ENCODE measurements at regions of chr7 and their contacts with region 1.

Region 1: DNA sequence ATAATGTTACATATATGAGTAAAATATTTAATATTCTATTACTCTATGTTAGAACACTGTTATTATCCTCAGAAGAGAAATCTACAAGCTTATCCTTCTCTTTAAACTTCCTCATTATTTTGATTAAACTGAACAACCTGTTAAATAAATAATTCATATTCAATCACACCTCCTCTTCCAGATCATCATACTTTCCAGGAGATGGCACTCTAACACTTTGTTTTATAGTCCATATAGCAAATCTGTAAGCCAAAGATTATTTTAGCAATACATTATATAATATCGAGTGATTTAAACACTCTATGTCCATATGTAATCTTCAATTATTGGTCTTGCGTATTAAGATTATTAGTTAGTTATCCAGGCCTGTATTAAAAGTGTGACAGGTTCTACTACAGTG is 694.1 kb downstream of the ANKRD7 start:
- DNase-seq: peak; percentile 52
- H3K4me3 ChIP-seq: no peak overlapping the region
- H3K27ac ChIP-seq: no peak overlapping the region
- H3K4me1 ChIP-seq: no peaks in the 10 kb centered on the region
- H3K27me3 ChIP-seq: no peaks in the 10 kb centered on the region
- CTCF ChIP-seq: peak; percentile 60

Region 2: GRCh38 chr7:118250860-118251494 is 667.6 kb before region 1 on chr7:
- CTCF ChIA-PET with region 1: no interaction called
- POLR2A ChIA-PET with region 1: no interaction called
- intact Hi-C with region 1: loop called (anchors 10 kb)
- DNase-seq: peak; percentile 23
- H3K4me3 ChIP-seq: no peak overlapping the region
- H3K27ac ChIP-seq: no peak overlapping the region
- H3K4me1 ChIP-seq: no peaks in the 10 kb centered on the region
- H3K27me3 ChIP-seq: no peaks in the 10 kb centered on the region
- CTCF ChIP-seq: peak; percentile 66

Region 3: DNA sequence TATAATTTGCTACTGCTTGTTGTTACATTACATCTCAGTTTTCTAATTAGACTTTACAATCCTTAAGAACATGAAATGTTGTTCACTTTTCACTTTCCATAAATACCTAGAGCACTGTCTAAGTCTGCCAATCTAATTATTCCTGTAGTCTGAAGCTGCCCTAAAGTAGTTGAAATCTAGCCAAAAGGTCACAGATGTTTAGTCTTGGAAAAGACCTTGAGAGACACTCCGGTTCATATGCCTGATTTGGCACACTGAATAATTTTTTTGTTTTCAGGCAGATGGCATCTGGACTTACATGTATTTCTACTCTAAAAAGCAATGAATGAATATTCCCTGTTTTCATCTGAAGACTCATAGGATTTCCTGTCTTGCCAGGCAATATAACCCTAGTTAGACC is 334.9 kb before region 1 on chr7:
- CTCF ChIA-PET with region 1: no interaction called
- POLR2A ChIA-PET with region 1: no interaction called
- intact Hi-C with region 1: no loop called
- DNase-seq: no peak
- H3K4me3 ChIP-seq: no peak overlapping the region
- H3K27ac ChIP-seq: no peak overlapping the region
- H3K4me1 ChIP-seq: no peaks in the 10 kb centered on the region
- H3K27me3 ChIP-seq: no peaks in the 10 kb centered on the region
- CTCF ChIP-seq: no peak

Region 4: GRCh38 chr7:119175911-119176627 is 257.5 kb after region 1 on chr7:
- CTCF ChIA-PET with region 1: interaction called, 3 read pairs
- POLR2A ChIA-PET with region 1: no interaction called
- intact Hi-C with region 1: loop called (anchors 2 kb)
- DNase-seq: peak; percentile 80
- H3K4me3 ChIP-seq: no peak overlapping the region
- H3K27ac ChIP-seq: no peak overlapping the region
- H3K4me1 ChIP-seq: peaks cover 6% of the 10 kb centered on the region
- H3K27me3 ChIP-seq: no peaks in the 10 kb centered on the region
- CTCF ChIP-seq: peak; percentile 87

Region 5: DNA sequence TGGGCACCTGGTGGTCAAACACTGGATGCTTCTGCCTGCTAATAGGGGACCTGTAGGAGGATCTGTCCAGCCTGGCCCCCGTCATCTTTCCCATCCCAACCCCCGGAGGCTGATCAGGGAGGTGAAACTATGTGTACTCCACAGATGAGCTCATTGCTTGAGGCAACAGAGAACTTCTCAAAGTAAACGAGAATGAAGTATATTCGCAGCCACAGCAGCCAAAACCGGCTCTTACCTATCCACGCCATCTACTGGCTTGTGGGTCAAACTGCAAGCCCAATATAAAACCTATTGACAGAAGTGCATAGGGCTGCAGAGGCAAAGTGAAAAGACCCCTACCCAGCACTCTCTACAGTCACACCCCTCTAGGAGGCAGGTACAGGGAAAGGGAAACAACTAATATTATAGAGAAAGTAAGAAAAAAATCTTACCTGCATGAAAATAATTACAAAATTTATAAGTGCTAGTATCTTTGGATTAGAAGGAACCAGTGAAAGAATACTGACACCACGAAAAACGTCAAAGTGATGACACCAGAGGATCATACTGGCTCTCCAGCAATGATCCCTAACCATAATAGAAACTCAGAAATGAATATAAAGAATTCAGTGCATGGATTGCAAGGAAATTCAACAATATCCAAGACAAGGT is 279.4 kb after region 1 on chr7:
- CTCF ChIA-PET with region 1: no interaction called
- POLR2A ChIA-PET with region 1: no interaction called
- intact Hi-C with region 1: loop called (anchors 1 kb)
- DNase-seq: peak; percentile 72
- H3K4me3 ChIP-seq: no peak overlapping the region
- H3K27ac ChIP-seq: no peak overlapping the region
- H3K4me1 ChIP-seq: no peaks in the 10 kb centered on the region
- H3K27me3 ChIP-seq: no peaks in the 10 kb centered on the region
- CTCF ChIP-seq: peak; percentile 80

Region 6: GRCh38 chr7:120554960-120555571 is 1636.5 kb after region 1 on chr7:
- CTCF ChIA-PET with region 1: no interaction called
- POLR2A ChIA-PET with region 1: no interaction called
- intact Hi-C with region 1: loop called (anchors 5 kb)
- DNase-seq: peak; percentile 71
- H3K4me3 ChIP-seq: no peak overlapping the region
- H3K27ac ChIP-seq: no peak overlapping the region
- H3K4me1 ChIP-seq: peaks cover 16% of the 10 kb centered on the region
- H3K27me3 ChIP-seq: no peaks in the 10 kb centered on the region
- CTCF ChIP-seq: peak; percentile 81

Measured in A673 (cell line).